ENCODE measurements at regions of chr2 and their contacts with region 1.

Region 1: GRCh38 chr2:143217512-143218115 is 88.4 kb downstream of the ARHGAP15 start:
- DNase-seq: no peak
- ATAC-seq: peak; percentile 44
- H3K4me3 Mint-ChIP-seq: no peak overlapping the region
- H3K27ac Mint-ChIP-seq: peak overlapping the region; percentile 73
- H3K4me1 Mint-ChIP-seq: peaks cover 30% of the 10 kb centered on the region
- H3K27me3 Mint-ChIP-seq: no peaks in the 10 kb centered on the region

Region 2: GRCh38 chr2:142813830-142814829 is 403.5 kb before region 1 on chr2:
- CTCF ChIA-PET with region 1: no interaction called
- POLR2A ChIA-PET with region 1: no interaction called
- DNase-seq: no peak
- ATAC-seq: no peak
- H3K4me3 Mint-ChIP-seq: no peak overlapping the region
- H3K27ac Mint-ChIP-seq: no peak overlapping the region
- H3K4me1 Mint-ChIP-seq: no peaks in the 10 kb centered on the region
- H3K27me3 Mint-ChIP-seq: no peaks in the 10 kb centered on the region

Region 3: GRCh38 chr2:143171532-143172216 is 45.9 kb before region 1 on chr2:
- CTCF ChIA-PET with region 1: no interaction called
- POLR2A ChIA-PET with region 1: no interaction called
- DNase-seq: no peak
- ATAC-seq: no peak
- H3K4me3 Mint-ChIP-seq: no peak overlapping the region
- H3K27ac Mint-ChIP-seq: no peak overlapping the region
- H3K4me1 Mint-ChIP-seq: peaks cover 53% of the 10 kb centered on the region
- H3K27me3 Mint-ChIP-seq: no peaks in the 10 kb centered on the region

Region 4: DNA sequence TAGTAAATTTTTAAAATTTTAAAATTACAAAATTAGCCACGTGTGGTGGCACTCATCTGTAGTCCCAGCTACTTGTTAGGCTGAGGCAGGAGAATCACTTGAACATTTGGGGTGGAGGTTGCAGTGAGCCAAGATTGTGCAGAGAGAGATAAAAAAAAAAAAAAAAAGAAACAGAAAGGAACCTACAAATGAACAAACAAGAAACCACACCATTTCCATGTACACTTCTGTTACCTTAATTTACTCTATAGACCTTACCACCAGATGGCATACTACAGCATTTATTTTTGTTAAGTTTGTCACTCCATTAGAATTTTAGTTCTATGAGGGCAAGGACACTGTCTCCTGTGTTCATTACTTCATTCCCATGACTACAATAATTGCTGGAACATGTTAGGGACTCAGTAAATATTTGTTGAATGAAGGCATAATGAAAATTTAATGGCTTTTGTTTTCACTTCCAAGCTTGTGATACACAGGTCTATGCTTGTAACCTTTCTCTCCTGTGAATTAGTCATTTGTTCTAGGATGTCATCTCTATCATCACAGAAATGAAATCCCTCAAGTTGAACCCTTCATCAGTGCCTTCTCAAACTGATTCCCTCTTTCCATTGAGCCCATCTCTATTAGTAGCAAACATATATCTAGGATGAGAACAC is 12.4 kb before region 1 on chr2:
- CTCF ChIA-PET with region 1: interaction called, 16 read pairs
- POLR2A ChIA-PET with region 1: no interaction called
- DNase-seq: no peak
- ATAC-seq: peak; percentile 77
- H3K4me3 Mint-ChIP-seq: no peak overlapping the region
- H3K27ac Mint-ChIP-seq: peak overlapping the region; percentile 74
- H3K4me1 Mint-ChIP-seq: peaks cover 48% of the 10 kb centered on the region
- H3K27me3 Mint-ChIP-seq: no peaks in the 10 kb centered on the region

Region 5: GRCh38 chr2:143254110-143254509 is 36.5 kb after region 1 on chr2:
- CTCF ChIA-PET with region 1: interaction called, 47 read pairs
- POLR2A ChIA-PET with region 1: no interaction called
- DNase-seq: peak; percentile 63
- ATAC-seq: peak; percentile 26
- H3K4me3 Mint-ChIP-seq: peak overlapping the region; percentile 45
- H3K27ac Mint-ChIP-seq: peak overlapping the region; percentile 81
- H3K4me1 Mint-ChIP-seq: peaks cover 75% of the 10 kb centered on the region
- H3K27me3 Mint-ChIP-seq: no peaks in the 10 kb centered on the region